Sigmoid colon (tissue), 7 donors: ENCODE measurements at regions of chr20 and their contacts with region 1.

Region 1: DNA sequence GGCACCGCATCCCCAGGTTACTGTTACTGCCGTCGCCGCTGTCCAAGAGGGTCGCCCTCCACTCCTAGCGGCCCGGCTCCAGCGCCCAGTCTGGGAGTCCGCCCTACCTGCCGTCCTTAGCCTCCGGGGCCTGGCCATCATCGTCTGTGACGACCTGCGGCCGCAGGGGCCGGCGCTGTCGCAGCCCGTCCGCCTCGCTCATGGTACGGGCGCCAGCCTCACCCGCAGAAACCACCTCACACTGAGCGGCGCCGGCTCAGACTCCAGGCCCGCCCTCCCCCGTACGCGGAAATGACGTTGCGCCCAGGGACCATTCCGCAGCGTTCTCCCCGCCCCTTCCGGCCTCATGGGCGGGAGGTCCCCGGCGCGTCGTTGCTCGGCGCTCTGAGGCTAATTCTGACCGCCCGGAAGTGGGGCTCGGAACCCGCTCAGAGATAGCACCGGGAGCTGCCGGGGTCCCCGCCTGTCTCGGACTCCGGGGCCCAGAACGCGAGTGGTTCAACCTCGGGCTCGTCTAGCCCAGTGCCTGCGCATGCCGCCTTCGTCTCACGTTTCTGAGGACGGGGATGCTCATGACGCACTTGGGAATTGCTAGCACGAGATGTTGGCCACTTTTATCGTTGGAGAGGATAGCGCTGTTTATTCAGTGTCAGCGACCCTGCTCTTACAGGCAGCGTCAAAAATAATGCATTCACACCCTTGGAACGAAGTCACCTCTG is at the start of gene APMAP:
- DNase-seq: peak; percentile 97
- H3K4me3 ChIP-seq: peak within 1 kb of the TSS; percentile 65 to 95 (median 72)
- H3K27ac ChIP-seq: peak within 1 kb of the TSS; percentile 86 to 94 (median 92)
- H3K4me1 ChIP-seq: peaks cover 0 to 52% (median 47%) of the 10 kb centered on the region in 4 donors
- H3K27me3 ChIP-seq: no peaks in the 10 kb centered on the region
- CTCF ChIP-seq: no peak
- EP300 ChIP-seq: peak in 1 of 4 donors; percentile 51
- POLR2A ChIP-seq: peak; percentile 97
- total RNA-seq, gene APMAP: 22.7 to 35.3 (median 28.9) TPM

Region 2: DNA sequence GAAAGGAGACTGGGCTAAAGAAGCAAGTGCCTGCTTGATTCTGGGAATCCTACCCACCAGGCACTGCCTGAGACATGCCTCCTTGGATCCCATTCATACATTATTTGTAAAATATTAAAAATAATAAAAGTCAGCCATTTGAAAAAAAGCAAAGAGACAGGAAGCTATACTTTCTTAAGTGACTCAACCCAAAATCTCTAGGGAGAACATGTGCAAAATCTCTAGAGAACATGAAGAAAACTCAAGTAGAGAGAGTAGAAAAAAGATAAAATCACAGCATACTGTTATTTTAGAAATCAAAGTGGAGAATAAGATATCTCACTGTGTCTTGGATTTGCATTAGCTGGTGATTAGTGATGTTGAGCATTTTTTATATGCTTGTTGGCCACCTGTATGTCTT is 806.9 kb before region 1 on chr20:
- intact Hi-C with region 1: no loop called
- DNase-seq: no peak
- H3K4me3 ChIP-seq: no peak overlapping the region
- H3K27ac ChIP-seq: no peak overlapping the region
- H3K4me1 ChIP-seq: no peaks in the 10 kb centered on the region
- H3K27me3 ChIP-seq: no peaks in the 10 kb centered on the region
- CTCF ChIP-seq: no peak
- EP300 ChIP-seq: no peak
- POLR2A ChIP-seq: no peak

Region 3: DNA sequence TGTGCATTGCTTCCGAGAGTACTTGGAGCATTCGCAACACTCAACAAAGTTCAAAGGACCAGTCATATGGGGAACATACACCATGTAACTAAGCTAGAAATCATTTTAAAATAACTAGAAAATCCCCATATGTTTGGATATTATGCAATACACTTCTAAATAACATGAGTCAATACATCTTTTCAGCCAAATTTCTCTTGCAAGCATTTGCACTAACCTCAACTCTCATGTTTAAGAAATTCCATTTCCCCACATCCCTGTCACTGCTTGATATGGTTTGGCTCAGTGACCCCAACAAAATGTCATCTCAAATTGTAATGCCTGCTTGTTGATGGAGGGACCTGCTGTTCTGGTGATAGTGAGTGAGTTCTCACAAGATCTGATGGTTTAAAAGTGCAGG is 129.3 kb before region 1 on chr20:
- intact Hi-C with region 1: no loop called
- DNase-seq: no peak
- H3K4me3 ChIP-seq: no peak overlapping the region
- H3K27ac ChIP-seq: no peak overlapping the region
- H3K4me1 ChIP-seq: no peaks in the 10 kb centered on the region
- H3K27me3 ChIP-seq: no peaks in the 10 kb centered on the region
- CTCF ChIP-seq: no peak
- EP300 ChIP-seq: no peak
- POLR2A ChIP-seq: no peak

Region 4: DNA sequence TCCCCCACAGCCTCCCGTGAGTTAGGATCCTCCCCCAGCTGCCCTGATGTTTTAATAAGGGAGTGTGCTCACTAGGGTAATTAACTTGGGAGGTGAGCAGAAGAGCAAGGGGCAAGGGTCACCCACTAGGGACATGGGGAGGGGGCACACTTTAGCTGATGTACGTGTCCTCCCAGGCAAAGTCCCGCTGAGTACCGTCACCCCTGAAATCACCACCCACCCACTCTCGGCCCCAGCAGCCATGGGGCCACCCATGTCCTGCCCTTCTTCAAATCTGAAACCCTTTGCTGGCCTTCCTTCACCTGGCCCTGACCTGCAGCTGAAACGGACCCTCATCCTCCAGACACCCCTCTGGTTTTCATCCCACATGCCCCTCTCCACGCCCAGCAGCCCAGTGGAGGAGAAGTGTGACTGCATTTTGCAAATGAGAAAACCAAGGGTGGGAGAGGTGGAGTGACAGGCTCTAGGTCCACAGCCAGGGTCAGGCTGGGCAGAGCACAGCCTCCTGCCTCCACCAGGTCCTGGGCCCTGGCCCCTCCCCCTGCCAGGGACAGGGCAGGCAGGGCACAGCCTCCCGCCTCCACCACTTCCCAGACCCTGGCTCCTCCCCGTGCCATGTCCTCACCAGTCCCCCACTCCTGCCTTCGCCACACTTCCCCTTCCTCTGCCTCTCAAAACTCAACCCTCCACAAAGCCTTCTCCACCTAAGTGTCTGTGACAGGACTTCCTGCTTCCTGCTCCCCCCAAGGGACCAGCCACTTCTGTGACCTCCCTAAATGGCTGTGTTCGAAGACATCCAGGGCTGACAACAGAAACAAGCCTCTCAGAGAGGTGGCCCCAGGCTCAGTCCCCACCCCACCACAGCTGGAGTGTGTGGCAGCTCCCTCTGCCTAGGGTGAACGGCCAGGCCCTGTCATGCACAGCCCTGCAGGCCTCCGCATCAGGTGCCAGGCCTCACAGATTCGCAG is 50.2 kb after region 1 on chr20:
- intact Hi-C with region 1: loop called (anchors 5 kb)
- DNase-seq: peak; percentile 85
- H3K4me3 ChIP-seq: no peak overlapping the region
- H3K27ac ChIP-seq: peak overlapping the region; percentile 52 to 93 (median 88)
- H3K4me1 ChIP-seq: peaks cover 0 to 79% (median 62%) of the 10 kb centered on the region in 4 donors
- H3K27me3 ChIP-seq: no peaks in the 10 kb centered on the region
- CTCF ChIP-seq: no peak
- EP300 ChIP-seq: no peak
- POLR2A ChIP-seq: no peak

Region 5: DNA sequence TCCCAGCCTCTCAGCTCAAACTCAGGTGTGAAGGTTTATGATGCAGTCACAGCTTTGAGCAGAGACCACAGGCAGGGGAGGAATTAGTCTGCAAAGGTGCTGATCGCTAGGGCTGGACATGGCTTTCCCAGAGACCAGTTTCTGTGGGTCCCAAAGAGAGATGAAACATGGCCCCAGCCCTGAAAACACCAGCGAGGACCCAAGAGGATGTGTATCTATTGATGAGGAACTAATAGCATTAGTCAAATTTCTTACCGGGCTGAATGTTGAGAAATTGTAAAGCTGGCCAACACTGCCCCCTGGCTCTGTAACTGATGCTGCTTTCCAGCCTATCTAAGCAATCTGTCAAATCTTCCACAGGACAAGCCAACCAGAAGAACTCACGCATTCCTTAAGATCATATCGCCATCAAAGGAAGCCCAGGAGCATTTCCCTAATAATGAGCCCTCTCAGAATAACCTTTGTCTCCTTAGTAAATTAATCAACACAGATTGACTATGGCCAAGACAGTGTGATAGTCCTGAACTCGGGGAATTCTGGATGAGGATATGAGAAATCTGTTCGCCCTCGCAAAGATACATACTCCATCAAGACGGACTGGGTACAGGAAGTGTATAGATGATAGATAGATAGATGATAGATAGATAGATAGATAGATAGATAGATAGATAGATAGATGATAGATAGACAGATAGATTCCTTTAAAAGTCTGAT is 73.1 kb after region 1 on chr20:
- intact Hi-C with region 1: loop called (anchors 1 kb)
- DNase-seq: peak; percentile 81
- H3K4me3 ChIP-seq: no peak overlapping the region
- H3K27ac ChIP-seq: no peak overlapping the region
- H3K4me1 ChIP-seq: peaks cover 0 to 7% (median 3%) of the 10 kb centered on the region in 4 donors
- H3K27me3 ChIP-seq: peaks cover 0 to 9% (median 0%) of the 10 kb centered on the region in 3 donors
- CTCF ChIP-seq: peak; percentile 75 to 89 (median 84)
- EP300 ChIP-seq: no peak
- POLR2A ChIP-seq: no peak

Region 6: GRCh38 chr20:25178563-25179438 is 186.2 kb after region 1 on chr20:
- intact Hi-C with region 1: loop called (anchors 1 kb)
- DNase-seq: peak; percentile 80
- H3K4me3 ChIP-seq: no peak overlapping the region
- H3K27ac ChIP-seq: peak overlapping the region; percentile 50 to 68 (median 58)
- H3K4me1 ChIP-seq: peaks cover 0 to 24% (median 15%) of the 10 kb centered on the region in 4 donors
- H3K27me3 ChIP-seq: no peaks in the 10 kb centered on the region
- CTCF ChIP-seq: peak; percentile 60 to 78 (median 69)
- EP300 ChIP-seq: no peak
- POLR2A ChIP-seq: no peak

Region 7: GRCh38 chr20:25195014-25195961 is 202.6 kb after region 1 on chr20 and contains the start of gene ENTPD6:
- intact Hi-C with region 1: loop called (anchors 5 kb)
- DNase-seq: peak; percentile 97
- H3K4me3 ChIP-seq: peak within 1 kb of the TSS; percentile 82 to 96 (median 92)
- H3K27ac ChIP-seq: peak within 1 kb of the TSS; percentile 87 to 92 (median 90)
- H3K4me1 ChIP-seq: peaks cover 0 to 53% (median 44%) of the 10 kb centered on the region in 4 donors
- H3K27me3 ChIP-seq: no peaks in the 10 kb centered on the region
- CTCF ChIP-seq: peak in 2 of 4 experiments; percentile 15 to 32
- EP300 ChIP-seq: peak in 1 of 4 donors; percentile 45
- POLR2A ChIP-seq: peak; percentile 82 to 85
- total RNA-seq, gene ENTPD6: 26.0 to 48.2 (median 37.2) TPM

Region 8: DNA sequence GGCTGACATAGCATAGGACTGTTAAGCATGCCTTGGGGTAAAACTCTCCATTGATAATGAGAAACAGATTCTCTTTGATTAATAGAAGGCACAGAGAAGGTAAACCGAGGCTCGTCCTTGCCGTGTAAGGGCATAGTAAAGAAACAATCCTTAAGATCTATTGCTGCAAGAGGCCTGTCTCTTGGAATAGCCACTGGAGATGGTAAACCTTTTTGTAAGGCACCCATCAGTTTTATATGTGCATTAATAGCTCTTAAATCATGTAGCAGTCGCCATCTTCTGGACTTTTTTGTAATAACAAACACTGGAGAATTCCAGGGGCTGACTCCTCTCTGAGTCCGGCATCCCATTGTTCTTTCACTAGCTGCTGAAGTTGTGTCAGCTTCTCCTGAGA is 406.4 kb after region 1 on chr20:
- intact Hi-C with region 1: loop called (anchors 2 kb)
- DNase-seq: no peak
- H3K4me3 ChIP-seq: no peak overlapping the region
- H3K27ac ChIP-seq: peak overlapping the region in 1 of 4 donors; percentile 39
- H3K4me1 ChIP-seq: peaks cover 0 to 8% (median 2%) of the 10 kb centered on the region in 4 donors
- H3K27me3 ChIP-seq: no peaks in the 10 kb centered on the region
- CTCF ChIP-seq: peak; percentile 35 to 62 (median 48)
- EP300 ChIP-seq: no peak
- POLR2A ChIP-seq: no peak